ENCODE measurements at regions of chr2 and their contacts with region 1.

Region 1: DNA sequence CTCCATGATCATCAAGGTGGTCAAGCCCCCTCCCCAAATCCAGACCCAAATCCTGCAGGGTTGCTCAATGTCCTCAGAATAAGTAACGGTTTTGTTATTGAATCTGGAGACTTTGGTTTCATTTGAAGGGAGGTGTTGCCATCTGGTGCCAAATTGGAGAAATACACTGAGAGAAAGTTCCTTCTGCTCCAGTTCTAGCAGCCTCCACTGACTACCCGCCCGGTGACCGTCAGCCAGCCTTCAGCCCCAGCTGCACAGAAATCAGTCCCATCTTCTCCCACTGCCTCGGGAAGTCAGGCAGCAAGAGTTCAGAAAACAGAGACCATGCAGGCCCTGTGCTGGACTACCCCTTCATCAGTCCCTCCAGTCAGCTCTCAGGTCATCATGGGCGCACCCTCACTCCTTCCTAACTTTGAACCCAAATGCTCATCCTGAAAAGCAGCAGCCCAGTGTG is 38.7 kb downstream of the PKDCC start:
- DNase-seq: peak; percentile 51
- H3K4me3 ChIP-seq: no peak overlapping the region
- H3K27ac ChIP-seq: no peak overlapping the region
- H3K4me1 ChIP-seq: no peaks in the 10 kb centered on the region
- H3K27me3 ChIP-seq: no peaks in the 10 kb centered on the region
- CTCF ChIP-seq: peak; percentile 61 to 90 (median 70)
- POLR2A ChIP-seq: no peak

Region 2: DNA sequence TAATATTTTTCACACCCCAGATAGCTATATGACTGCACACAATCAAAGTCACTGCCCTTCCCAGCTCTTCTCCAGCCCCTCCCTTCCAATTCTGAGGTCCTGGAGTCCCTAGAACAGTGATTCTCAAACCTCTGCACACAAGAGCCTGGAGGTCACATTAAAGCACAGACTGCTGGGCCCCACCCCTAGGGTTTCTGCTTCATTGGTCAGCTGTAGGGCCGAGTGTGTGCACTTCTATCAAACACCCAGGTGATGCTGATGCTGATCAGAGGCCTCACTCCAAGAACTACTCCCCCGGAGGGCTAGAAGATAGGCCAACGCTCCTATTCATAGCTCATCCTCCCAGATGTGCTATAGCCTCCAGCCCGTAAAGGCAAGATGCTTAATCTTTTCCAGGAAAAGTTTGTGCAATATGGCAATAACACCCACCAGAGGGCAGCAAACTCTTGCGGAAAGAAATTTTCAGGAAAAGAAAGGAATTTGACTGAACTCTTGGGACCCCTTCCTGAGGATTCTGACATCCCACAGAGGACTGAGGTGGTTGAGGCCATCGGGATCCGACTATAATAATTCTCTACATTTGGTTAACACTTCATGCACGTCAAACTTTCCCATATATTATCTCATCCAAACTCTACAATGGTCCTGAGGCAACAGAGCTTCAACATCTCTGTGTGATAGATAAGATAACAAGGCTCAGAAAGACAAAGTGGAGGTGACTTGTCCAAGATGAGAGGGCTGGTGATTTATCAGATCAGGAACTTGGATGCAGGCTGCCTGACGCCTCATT is 232.9 kb before region 1 on chr2:
- intact Hi-C with region 1: loop called (anchors 5 kb)
- DNase-seq: peak; percentile 71
- H3K4me3 ChIP-seq: no peak overlapping the region
- H3K27ac ChIP-seq: no peak overlapping the region
- H3K4me1 ChIP-seq: no peaks in the 10 kb centered on the region
- H3K27me3 ChIP-seq: no peaks in the 10 kb centered on the region
- CTCF ChIP-seq: peak; percentile 72 to 83 (median 78)
- POLR2A ChIP-seq: no peak

Region 3: GRCh38 chr2:41869542-41870264 is 216.8 kb before region 1 on chr2:
- intact Hi-C with region 1: loop called (anchors 5 kb)
- DNase-seq: peak; percentile 78
- H3K4me3 ChIP-seq: no peak overlapping the region
- H3K27ac ChIP-seq: peak overlapping the region in 1 of 2 donors; percentile 53
- H3K4me1 ChIP-seq: peaks cover 34% of the 10 kb centered on the region
- H3K27me3 ChIP-seq: no peaks in the 10 kb centered on the region
- CTCF ChIP-seq: peak; percentile 81 to 85 (median 81)
- POLR2A ChIP-seq: no peak